ENCODE measurements at regions of chr19 and their contacts with region 1.

Region 1: GRCh38 chr19:5967994-5968430 is 9.9 kb downstream of the RANBP3 start:
- DNase-seq: peak; percentile 81
- ATAC-seq: peak; percentile 88
- H3K4me3 ChIP-seq: no peak overlapping the region
- H3K27ac ChIP-seq: no peak overlapping the region
- H3K4me1 ChIP-seq: no peaks in the 10 kb centered on the region; the same call in 1 of the 2 replicates
- H3K27me3 ChIP-seq: no peaks in the 10 kb centered on the region
- CTCF ChIP-seq: peak; percentile 92

Region 2: GRCh38 chr19:5921516-5922160 is 46.4 kb before region 1 on chr19:
- CTCF ChIA-PET with region 1: no interaction called
- POLR2A ChIA-PET with region 1: no interaction called
- intact Hi-C with region 1: no loop called
- DNase-seq: no peak
- ATAC-seq: no peak
- H3K4me3 ChIP-seq: no peak overlapping the region
- H3K27ac ChIP-seq: no peak overlapping the region
- H3K4me1 ChIP-seq: no peaks in the 10 kb centered on the region
- H3K27me3 ChIP-seq: no peaks in the 10 kb centered on the region
- CTCF ChIP-seq: no peak

Region 3: DNA sequence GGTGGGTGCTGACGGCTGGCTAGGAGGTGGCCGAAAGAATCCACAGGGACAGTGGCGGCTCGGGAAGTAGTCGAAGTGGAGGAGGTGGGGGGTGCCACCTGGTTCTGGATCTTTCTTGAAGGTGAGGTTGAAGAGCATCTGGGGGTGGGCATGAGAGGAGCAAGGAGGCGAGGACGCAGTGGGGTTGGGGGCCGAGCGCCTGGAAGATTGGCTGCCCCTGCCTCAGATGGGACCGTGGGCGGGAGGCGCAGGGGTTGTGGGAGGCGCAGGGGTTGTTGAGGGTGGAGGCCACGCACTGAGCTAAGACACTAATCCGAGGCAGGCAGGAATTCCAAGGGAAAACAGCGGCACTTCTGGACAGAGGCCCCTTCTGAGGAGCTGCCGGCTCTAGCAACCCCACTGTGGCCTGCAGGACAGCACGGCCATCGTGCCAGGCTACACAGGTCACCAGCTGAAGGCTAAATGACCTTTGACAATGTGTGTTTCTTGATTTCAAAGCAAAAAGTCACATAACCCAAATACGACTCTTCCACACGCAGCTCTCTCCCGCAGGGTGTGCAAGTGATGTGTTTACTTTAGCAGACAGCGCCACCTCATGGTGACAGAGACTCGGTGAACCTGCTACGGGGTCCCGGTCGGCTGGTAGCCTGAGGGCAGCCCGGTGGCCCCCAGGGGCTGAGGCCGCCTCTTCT is 54.0 kb after region 1 on chr19:
- CTCF ChIA-PET with region 1: interaction called, 15 read pairs
- POLR2A ChIA-PET with region 1: no interaction called
- intact Hi-C with region 1: no loop called
- DNase-seq: peak; percentile 85
- ATAC-seq: peak; percentile 92
- H3K4me3 ChIP-seq: no peak overlapping the region
- H3K27ac ChIP-seq: no peak overlapping the region
- H3K4me1 ChIP-seq: peaks cover 35% of the 10 kb centered on the region
- H3K27me3 ChIP-seq: no peaks in the 10 kb centered on the region
- CTCF ChIP-seq: peak; percentile 93

Measured in PC-3 (cell line).